HEK293 (cell line): ENCODE measurements at regions of chr17 and their contacts with region 1.

Region 1: DNA sequence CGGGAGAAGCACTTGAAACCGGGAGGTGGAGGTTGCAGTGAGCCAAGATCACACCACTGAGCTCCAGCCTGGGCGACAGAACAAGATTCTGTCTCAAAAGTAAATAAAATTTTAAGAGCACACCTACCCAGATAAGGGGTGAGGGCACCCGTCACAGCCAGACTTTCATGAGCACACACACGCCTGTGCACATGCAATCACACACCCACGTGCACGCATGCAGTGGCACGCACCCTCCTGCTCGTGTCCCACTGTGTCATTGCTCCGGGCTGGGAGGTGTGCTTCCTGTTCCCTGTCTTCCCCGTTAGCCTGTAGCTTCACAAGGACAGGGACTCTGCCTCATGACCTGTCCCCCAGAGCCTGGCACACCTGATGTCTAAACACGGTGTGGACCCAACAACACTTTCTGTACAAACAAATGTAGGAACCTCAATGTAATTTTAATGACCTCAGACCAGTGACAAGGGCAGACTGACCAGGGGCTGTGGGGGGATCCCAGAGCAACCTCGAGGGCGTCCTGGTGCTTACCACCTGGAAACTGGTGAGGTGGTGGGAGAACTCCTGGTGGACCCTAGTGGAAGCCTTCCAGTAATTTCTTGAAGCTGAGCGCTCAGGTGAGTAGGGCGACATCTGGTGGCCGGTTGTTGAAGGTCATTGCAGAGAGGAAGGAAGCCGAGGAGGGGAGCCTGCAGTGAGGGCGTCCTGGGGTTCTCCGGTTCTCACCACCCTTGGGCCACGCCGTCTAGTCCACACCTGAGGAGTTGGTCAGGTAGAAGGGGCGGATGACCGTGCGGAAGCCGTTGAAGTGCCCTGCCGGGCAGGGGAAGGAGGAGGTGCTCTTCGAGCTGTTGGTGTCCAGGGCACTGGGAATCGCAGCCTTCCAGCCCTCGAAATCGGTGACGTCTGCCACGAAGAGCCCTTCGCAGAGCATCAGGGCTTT is 8.6 kb downstream of the LGALS3BP start:
- H3K4me3 ChIP-seq: no peak overlapping the region
- H3K27ac ChIP-seq: no peak overlapping the region
- H3K4me1 ChIP-seq: peaks cover 5% of the 10 kb centered on the region
- CTCF ChIP-seq: peak; percentile 96

Region 2: GRCh38 chr17:78865682-78866390 is 105.3 kb before region 1 on chr17:
- CTCF ChIA-PET with region 1: interaction called, 72 read pairs
- POLR2A ChIA-PET with region 1: interaction called, 17 read pairs
- H3K4me3 ChIP-seq: no peak overlapping the region
- H3K27ac ChIP-seq: no peak overlapping the region
- H3K4me1 ChIP-seq: peaks cover 2% of the 10 kb centered on the region; the same call in 1 of the 2 replicates
- CTCF ChIP-seq: peak; percentile 57; the same call in 1 of the 2 replicates

Region 3: DNA sequence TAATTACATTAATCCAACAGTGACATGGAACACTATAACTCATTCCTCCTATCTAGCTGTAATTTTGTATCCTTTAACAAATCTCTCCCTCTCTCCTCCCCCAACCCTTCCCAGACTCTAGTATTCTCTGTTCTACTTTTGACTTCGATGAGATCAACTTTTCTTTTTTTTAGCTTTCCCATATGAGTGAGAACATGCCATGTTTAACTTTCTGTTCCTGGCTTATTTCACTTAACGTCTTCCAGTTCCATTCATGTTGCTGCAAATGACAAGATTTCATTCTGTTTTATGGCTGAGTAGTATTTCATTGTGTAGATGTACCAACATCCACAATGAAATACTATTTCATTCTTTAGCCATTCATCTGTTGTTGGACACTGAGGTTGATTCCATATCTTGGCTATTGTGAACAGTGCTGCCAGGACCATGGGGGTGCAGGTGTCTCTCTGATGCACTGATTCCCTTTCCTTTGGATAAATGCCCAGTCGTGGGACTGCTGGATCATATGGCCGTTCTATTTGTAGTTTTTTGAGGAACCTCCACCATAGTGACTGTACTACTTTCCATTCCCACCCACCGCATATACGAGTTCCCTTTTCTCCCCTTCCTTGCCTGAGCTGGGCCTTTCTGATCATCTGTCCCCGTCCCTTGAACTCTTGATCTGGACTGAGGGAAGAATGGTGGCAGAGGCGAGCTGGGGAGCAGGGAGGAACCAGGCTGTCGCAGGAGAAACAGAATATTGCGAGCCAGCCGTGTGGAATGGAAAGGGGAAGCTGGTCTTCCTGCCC is 60.4 kb before region 1 on chr17:
- CTCF ChIA-PET with region 1: interaction called, 14 read pairs
- POLR2A ChIA-PET with region 1: no interaction called
- H3K4me3 ChIP-seq: no peak overlapping the region
- H3K27ac ChIP-seq: no peak overlapping the region
- H3K4me1 ChIP-seq: no peaks in the 10 kb centered on the region
- CTCF ChIP-seq: no peak

Region 4: GRCh38 chr17:78953356-78954265 is 17.5 kb before region 1 on chr17:
- CTCF ChIA-PET with region 1: interaction called, 58 read pairs
- POLR2A ChIA-PET with region 1: no interaction called
- H3K4me3 ChIP-seq: no peak overlapping the region
- H3K27ac ChIP-seq: no peak overlapping the region
- H3K4me1 ChIP-seq: no peaks in the 10 kb centered on the region
- CTCF ChIP-seq: no peak

Region 5: DNA sequence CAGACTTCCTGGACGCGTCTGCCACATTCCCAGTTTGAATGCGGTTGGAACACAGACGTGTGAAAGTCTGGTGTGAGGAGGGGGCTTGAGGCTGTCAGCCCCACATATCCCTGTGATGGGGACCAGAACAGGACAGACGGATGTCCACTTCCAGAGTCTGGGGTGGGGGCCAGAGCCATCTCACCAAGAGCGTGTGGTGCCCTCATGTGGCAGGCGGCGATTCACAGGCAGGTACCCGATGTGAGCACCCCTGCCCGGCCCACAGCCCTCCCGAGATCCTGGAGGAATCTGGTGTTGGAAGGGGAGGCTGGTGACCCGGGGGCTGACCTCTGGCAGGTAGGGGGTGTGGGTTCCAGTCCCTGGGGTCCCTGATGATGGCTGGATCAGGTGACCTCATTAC is 155.0 kb after region 1 on chr17:
- CTCF ChIA-PET with region 1: no interaction called
- POLR2A ChIA-PET with region 1: no interaction called
- H3K4me3 ChIP-seq: no peak overlapping the region
- H3K27ac ChIP-seq: no peak overlapping the region
- H3K4me1 ChIP-seq: no peaks in the 10 kb centered on the region
- CTCF ChIP-seq: peak; percentile 37; the same call in 1 of the 2 replicates